Right ventricle myocardium inferior (tissue), 1 donor: ENCODE measurements at regions of chr5 and their contacts with region 1.

Region 1: GRCh38 chr5:159819591-159820411 is 96.5 kb upstream of the ADRA1B start:
- DNase-seq: peak; percentile 78
- ATAC-seq: peak; percentile 96

Region 2: DNA sequence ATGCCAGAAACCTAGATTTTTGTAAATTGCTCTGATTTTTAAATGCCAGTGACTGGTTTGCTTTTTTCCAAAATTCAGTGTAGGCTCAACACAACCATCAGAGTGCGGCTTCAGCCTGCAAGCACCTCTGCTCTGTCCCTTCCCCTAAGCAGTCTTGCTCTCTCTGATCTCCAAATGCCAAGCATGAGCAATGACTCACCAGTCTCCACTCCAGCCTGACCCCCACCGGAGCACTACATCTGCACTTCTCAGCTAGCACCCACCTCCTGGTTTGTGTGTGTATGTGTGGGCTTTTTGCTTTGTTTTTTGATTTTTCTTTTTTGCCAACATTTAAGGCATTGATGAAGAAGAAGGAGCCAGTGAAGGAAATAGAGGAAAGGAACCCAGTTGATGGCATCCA is 35.1 kb after region 1 on chr5:
- intact Hi-C with region 1: loop called (anchors 5 kb)
- DNase-seq: no peak
- ATAC-seq: no peak